PC-9 (cell line): ENCODE measurements at regions of chr2 and their contacts with region 1.

Region 1: DNA sequence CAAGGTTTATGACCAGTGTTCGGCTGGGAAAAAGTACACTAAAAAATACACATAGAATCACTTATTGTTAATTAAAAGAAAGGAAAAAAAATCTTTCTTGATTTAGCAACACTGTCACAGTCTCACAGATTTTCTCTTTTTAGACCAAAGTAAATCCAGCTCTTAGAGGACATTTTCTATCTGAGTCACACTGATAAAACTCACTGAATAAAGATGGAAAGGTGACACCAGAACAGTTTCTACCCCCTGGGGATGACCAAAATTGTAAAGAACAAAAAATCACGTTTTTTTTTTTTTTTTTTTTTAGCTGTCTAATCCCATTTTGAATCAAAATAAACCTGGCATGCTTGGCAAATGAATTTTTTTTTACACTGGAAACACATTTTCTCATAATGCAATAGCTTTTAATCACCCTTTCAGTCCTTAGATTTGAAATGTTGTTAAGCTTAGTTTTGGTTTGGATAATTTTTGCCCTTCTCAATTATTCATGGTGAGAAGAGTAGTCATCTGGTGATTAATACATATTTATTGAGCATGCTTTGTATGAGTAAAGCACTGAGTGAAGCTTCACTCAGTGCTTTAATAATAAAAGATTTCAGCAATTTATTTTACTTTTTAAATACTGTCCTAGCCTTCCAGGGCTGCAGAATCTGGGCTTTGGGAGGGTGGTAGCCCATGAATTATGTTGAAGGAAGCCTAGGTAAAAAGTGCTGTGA is 886.3 kb downstream of the SLC4A3 start:
- DNase-seq: no peak
- H3K4me3 ChIP-seq: no peak overlapping the region
- H3K27ac ChIP-seq: no peak overlapping the region
- H3K4me1 ChIP-seq: peaks cover 21% of the 10 kb centered on the region
- H3K27me3 ChIP-seq: no peaks in the 10 kb centered on the region
- CTCF ChIP-seq: no peak

Region 2: DNA sequence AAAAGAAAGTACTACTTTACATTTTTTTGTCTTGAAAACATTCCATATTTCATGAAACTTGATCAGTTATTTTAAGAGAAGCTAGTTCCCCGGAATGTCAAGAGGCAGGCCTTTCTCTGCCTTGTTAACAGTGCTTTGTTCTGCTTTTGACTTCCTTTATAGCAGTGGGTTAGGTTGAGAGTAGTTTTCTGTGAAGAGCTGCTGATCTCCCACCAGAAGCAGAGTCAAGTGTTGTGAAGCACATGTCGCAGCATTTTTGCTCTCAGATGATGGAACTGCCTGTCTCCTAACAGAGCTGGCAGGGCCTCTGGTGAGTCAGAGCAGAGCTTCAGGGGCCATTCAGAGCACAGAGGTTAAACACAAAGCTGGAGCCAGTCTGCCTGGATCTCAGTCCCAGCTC is 14.5 kb before region 1 on chr2:
- CTCF ChIA-PET with region 1: no interaction called
- POLR2A ChIA-PET with region 1: interaction called, 19 read pairs
- intact Hi-C with region 1: no loop called
- DNase-seq: peak in 1 of 2 experiments; percentile 41
- H3K4me3 ChIP-seq: no peak overlapping the region
- H3K27ac ChIP-seq: peak overlapping the region; percentile 32; the same call in 1 of the 2 replicates
- H3K4me1 ChIP-seq: peaks cover 13% of the 10 kb centered on the region
- H3K27me3 ChIP-seq: no peaks in the 10 kb centered on the region
- CTCF ChIP-seq: no peak